Activated CD4-positive, alpha-beta T cell treated with anti-CD3 and anti-CD28 coated beads, Interleukin-2, amount 10 ng/mL, durations not matched to agents 7 days and 5 days (primary cell): ENCODE measurements at regions of chr6 and their contacts with region 1.

Region 1: DNA sequence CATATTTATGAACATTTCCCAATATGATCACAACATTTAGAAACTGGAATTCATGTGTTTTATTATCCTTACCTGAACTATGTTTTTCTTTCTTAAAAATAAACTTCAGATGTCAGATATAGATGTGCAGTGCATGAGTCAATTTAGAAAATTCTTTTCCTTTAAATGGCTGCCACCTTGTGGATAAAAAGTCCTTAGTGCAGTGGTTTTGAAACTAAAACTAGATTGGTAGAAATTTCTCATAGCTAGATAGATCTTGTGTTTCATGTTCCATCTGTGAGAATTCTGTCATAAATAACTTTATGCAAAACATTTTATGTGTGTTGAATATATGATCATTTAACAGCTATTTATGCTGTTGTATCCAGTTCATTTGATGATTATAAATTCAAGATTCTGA is 134.9 kb downstream of the KLHL32 start:
- DNase-seq: no peak
- H3K4me3 Mint-ChIP-seq: no peak overlapping the region
- H3K27ac Mint-ChIP-seq: no peak overlapping the region
- H3K4me1 Mint-ChIP-seq: no peaks in the 10 kb centered on the region
- H3K27me3 Mint-ChIP-seq: peaks cover 2% of the 10 kb centered on the region

Region 2: DNA sequence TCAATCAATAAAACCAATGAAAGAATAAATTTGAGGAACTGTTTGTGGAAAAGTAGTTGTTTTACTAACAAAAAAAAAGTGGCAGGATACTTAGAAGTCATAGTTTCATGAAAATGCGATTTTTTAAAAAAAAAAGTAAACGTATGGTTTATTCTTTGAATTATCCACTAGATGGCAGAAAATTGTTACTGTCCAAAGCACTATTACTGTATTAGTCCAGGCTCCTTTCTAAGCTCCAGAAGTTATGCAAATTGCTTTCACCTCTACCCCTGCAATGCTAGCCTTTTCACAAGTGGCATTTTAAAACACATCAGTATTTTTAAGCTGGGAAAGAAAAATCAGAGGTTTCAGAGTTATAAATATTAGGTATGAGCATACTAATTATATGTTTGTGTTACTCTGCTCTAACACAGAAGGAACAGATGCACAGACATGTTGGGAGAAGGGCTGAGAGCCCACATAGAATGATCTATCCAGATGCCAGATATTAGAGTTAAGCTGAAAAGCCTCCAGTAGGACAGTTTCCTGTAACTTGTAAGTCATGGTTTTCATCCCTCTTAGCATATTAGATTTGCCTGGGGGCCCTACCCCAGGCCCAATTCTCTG is 432.6 kb before region 1 on chr6:
- CTCF ChIA-PET with region 1: no interaction called
- POLR2A ChIA-PET with region 1: interaction called, 12 read pairs
- DNase-seq: no peak
- H3K4me3 Mint-ChIP-seq: no peak overlapping the region
- H3K27ac Mint-ChIP-seq: no peak overlapping the region
- H3K4me1 Mint-ChIP-seq: no peaks in the 10 kb centered on the region
- H3K27me3 Mint-ChIP-seq: peaks cover 9% of the 10 kb centered on the region

Region 3: DNA sequence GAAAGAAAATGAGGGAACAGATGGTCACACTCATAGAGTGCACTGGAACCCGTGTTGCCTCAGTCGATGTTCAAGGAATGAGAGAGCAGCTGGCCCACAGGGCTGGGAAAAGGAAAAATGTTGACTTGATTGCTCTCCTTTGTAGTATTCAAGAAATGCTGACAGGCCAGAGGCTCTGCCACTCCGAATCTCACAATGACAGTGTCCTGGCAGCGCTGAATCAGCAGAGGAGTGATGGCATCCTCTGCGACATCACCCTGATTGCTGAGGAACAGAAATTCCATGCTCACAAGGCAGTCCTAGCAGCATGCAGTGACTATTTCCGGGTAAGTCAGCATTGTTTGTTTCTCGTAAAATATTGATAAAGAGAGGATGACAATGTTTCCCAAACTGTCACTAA is 83.6 kb before region 1 on chr6:
- CTCF ChIA-PET with region 1: no interaction called
- POLR2A ChIA-PET with region 1: no interaction called
- DNase-seq: no peak
- H3K4me3 Mint-ChIP-seq: no peak overlapping the region
- H3K27ac Mint-ChIP-seq: no peak overlapping the region
- H3K4me1 Mint-ChIP-seq: no peaks in the 10 kb centered on the region
- H3K27me3 Mint-ChIP-seq: no peaks in the 10 kb centered on the region